Posterior vena cava (tissue), 2 donors: ENCODE measurements at regions of chr1 and their contacts with region 1.

Region 1: GRCh38 chr1:56584910-56585528 is 5.7 kb upstream of the PLPP3 start:
- DNase-seq: no peak

Region 2: GRCh38 chr1:55375617-55376258 is 1209.3 kb before region 1 on chr1:
- intact Hi-C with region 1: loop called in 1 of 2 experiments (anchors 10 kb)
- DNase-seq: no peak

Region 3: DNA sequence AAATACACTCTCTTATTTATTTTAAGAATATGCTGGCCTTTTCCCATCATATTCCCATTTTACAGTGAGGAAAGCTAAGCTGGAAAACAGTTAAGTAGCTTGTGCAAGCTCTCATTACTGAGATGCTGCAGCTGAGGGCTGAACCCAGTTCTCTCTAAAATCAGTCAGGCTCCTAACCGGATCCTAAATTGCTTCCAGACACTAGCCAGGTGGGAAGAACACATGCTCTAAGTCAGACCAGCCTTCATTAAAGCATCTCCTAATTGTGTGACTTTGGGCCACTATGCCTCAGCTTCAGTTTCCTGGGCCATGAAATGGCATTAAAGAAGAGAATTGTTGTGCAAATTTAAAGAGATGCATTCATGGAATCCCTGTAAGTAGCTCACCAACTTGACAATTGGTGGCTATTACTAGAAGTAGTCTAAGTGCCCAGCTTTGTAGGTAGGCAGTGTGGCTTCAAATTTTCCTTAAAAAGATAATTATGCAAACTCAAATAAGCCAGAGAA is 610.5 kb after region 1 on chr1:
- intact Hi-C with region 1: no loop called
- DNase-seq: no peak

Region 4: DNA sequence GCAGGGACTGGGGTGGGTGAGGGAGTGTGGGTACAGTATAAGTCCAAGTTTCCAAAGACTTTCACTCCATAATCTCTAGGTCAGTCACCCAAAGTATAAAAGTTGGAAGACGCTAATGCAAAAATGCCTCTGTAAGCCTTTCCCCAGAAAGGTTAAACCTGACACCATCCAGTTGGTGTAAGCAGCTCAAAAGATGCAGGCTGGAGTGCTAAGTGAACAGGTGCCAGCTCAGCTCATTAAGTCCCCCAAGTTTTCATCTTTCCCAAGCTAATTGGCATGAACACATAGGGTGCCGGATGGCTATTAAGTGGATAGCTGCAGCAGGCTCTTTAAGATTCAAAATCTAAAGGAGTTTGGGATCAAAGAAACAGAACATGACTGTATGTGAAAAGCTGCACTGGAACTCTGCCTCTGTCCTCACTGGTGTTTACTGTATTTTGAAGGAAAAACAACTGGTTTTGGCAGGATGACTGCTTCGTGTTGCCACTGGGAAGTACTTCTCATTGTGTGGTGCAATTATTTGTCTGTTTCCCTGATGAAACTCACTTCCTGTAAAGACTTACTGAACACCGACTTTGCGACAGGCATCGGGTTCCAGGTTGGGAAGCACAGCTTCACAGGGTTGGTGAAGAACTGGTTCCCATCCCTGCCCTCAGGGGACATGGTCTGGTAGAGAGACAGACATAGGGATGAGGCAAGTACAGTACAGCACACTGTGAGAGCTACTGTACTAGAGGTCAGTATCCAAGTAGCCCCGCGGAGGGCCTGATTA is 686.1 kb after region 1 on chr1:
- intact Hi-C with region 1: no loop called
- DNase-seq: no peak